ENCODE measurements at regions of chr1 and their contacts with region 1.

Region 1: GRCh38 chr1:27445177-27445936 is 44.6 kb downstream of the WASF2 start:
- DNase-seq: no peak
- ATAC-seq: peak; percentile 53
- H3K4me3 ChIP-seq: no peak overlapping the region
- H3K4me3 Mint-ChIP-seq: peak overlapping the region; percentile 53
- H3K27ac ChIP-seq: peak overlapping the region; percentile 30 to 43
- H3K27ac Mint-ChIP-seq: peak overlapping the region; percentile 79
- H3K4me1 ChIP-seq: peaks cover 32 to 33% of the 10 kb centered on the region in 2 donors
- H3K4me1 Mint-ChIP-seq: peaks cover 55% of the 10 kb centered on the region
- H3K27me3 ChIP-seq: no peaks in the 10 kb centered on the region
- H3K27me3 Mint-ChIP-seq: no peaks in the 10 kb centered on the region
- CTCF ChIP-seq: no peak

Region 2: GRCh38 chr1:27179379-27179778 is 266.0 kb before region 1 on chr1:
- CTCF ChIA-PET with region 1: no interaction called
- POLR2A ChIA-PET with region 1: no interaction called
- intact Hi-C with region 1: no loop called
- DNase-seq: no peak
- ATAC-seq: no peak
- H3K4me3 ChIP-seq: no peak overlapping the region
- H3K4me3 Mint-ChIP-seq: no peak overlapping the region
- H3K27ac ChIP-seq: no peak overlapping the region
- H3K27ac Mint-ChIP-seq: no peak overlapping the region
- H3K4me1 ChIP-seq: no peaks in the 10 kb centered on the region
- H3K4me1 Mint-ChIP-seq: no peaks in the 10 kb centered on the region
- H3K27me3 ChIP-seq: no peaks in the 10 kb centered on the region
- H3K27me3 Mint-ChIP-seq: no peaks in the 10 kb centered on the region
- CTCF ChIP-seq: no peak

Region 3: DNA sequence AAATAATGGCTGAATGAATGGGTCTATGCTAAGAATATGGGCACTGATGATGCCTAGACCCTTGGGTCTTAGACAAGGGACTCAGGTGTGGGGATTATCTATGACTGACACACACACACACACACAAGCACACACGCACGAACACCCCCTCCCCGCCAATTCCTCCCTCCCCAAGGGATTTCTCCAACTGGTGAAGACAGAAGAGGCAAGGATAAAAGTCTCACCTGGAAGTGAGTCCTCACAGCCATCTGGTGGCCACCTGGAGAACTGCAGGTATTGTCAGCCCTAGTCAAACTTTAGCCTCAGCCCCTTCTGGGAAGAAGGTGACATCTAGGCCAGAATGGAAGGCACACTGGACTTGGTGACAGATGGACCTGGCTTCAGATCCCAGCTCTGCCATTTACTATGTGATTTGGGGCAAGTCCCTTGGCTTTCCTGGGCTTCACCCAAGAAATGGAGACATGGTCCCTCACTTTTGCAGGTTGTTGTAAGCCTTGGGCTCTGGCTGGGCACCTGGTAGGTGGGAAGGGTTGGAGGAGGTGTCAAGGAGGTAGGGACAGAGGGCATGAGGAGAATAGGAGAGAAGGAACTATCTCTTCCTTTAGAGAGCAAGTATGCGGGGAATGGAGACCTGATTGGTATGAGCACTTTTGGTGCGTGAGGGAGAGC is 56.9 kb before region 1 on chr1:
- CTCF ChIA-PET with region 1: no interaction called
- POLR2A ChIA-PET with region 1: no interaction called
- intact Hi-C with region 1: no loop called
- DNase-seq: peak; percentile 82
- ATAC-seq: peak; percentile 25
- H3K4me3 ChIP-seq: no peak overlapping the region
- H3K4me3 Mint-ChIP-seq: peak overlapping the region; percentile 14
- H3K27ac ChIP-seq: no peak overlapping the region
- H3K27ac Mint-ChIP-seq: peak overlapping the region; percentile 69
- H3K4me1 ChIP-seq: peaks cover 12 to 16% of the 10 kb centered on the region in 2 donors
- H3K4me1 Mint-ChIP-seq: peaks cover 18% of the 10 kb centered on the region
- H3K27me3 ChIP-seq: no peaks in the 10 kb centered on the region
- H3K27me3 Mint-ChIP-seq: peaks cover 3% of the 10 kb centered on the region
- CTCF ChIP-seq: peak; percentile 88

Region 4: GRCh38 chr1:27430903-27431600 is 14.3 kb before region 1 on chr1:
- CTCF ChIA-PET with region 1: interaction called, 7 read pairs
- POLR2A ChIA-PET with region 1: no interaction called
- intact Hi-C with region 1: loop called (anchors 2 kb)
- DNase-seq: peak; percentile 51
- ATAC-seq: peak; percentile 25
- H3K4me3 ChIP-seq: peak overlapping the region in 1 of 5 experiments; percentile 50
- H3K4me3 Mint-ChIP-seq: peak overlapping the region; percentile 66
- H3K27ac ChIP-seq: peak overlapping the region; percentile 50 to 70
- H3K27ac Mint-ChIP-seq: peak overlapping the region; percentile 79
- H3K4me1 ChIP-seq: peaks cover 95 to 99% of the 10 kb centered on the region in 2 donors
- H3K4me1 Mint-ChIP-seq: peaks cover 88% of the 10 kb centered on the region
- H3K27me3 ChIP-seq: no peaks in the 10 kb centered on the region
- H3K27me3 Mint-ChIP-seq: no peaks in the 10 kb centered on the region
- CTCF ChIP-seq: no peak

Region 5: DNA sequence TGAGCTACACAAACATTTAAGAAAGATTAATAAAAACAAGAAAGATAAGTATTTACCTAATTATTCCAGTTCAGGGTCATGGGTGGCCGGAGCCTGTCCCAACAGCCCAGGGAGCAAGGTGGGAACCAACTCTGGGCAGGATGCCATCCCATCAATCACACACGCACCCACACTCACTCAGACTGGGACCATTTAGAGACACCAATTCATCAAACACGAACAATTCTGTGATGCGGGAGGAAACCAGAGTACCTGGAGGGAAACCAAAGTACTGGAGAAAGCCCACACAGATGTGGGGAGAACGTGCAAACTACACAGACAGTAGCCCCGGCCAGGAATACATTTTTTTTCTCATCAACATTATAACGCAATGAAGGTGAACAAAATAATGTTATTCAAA is 28.4 kb after region 1 on chr1:
- CTCF ChIA-PET with region 1: interaction called, 3 read pairs
- POLR2A ChIA-PET with region 1: no interaction called
- intact Hi-C with region 1: loop called (anchors 2 kb)
- DNase-seq: no peak
- ATAC-seq: no peak
- H3K4me3 ChIP-seq: no peak overlapping the region
- H3K4me3 Mint-ChIP-seq: peak overlapping the region; percentile 58
- H3K27ac ChIP-seq: peak overlapping the region in 1 of 2 donors; percentile 67
- H3K27ac Mint-ChIP-seq: peak overlapping the region; percentile 79
- H3K4me1 ChIP-seq: peaks cover 71 to 75% of the 10 kb centered on the region in 2 donors
- H3K4me1 Mint-ChIP-seq: peaks cover 83% of the 10 kb centered on the region
- H3K27me3 ChIP-seq: no peaks in the 10 kb centered on the region
- H3K27me3 Mint-ChIP-seq: no peaks in the 10 kb centered on the region
- CTCF ChIP-seq: no peak